Activated CD4-positive, alpha-beta T cell treated with anti-CD3 and anti-CD28 coated beads for 36 hours (primary cell): ENCODE measurements at regions of chr17 and their contacts with region 1.

Region 1: DNA sequence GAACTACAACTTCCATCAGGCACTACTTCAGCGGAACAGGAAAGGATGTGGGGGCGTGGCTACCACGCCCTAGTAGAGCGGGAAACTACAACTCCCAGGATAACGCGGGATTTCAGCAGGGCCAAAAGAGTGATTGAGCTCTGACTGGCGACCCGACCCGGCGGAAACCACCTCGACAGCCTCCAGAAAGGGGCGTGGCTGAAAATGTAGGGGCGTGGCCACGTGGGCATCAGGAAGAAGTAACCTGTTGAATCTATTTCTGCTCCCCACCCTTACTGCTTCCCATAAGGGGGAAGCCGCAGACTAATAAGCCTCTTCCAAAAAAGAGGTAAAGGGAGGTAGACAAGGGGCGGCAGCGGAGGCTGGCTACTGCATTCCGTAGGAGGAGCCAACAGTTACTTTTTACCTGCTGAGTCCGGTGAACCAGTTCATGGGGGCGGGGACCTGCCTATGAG is at the start of gene TMEM102:
- DNase-seq: peak; percentile 99
- ATAC-seq: peak; percentile 84
- H3K4me3 Mint-ChIP-seq: peak within 1 kb of the TSS; percentile 92
- H3K27ac Mint-ChIP-seq: peak within 1 kb of the TSS; percentile 92
- H3K4me1 Mint-ChIP-seq: peaks cover 33% of the 10 kb centered on the region
- H3K27me3 Mint-ChIP-seq: peaks cover 11% of the 10 kb centered on the region
- total RNA-seq, gene TMEM102: 8.7 to 10.7 TPM

Region 2: GRCh38 chr17:7214300-7215135 is 220.7 kb before region 1 on chr17:
- CTCF ChIA-PET with region 1: no interaction called
- POLR2A ChIA-PET with region 1: no interaction called
- intact Hi-C with region 1: loop called in 1 of 2 experiments (anchors 1 kb)
- DNase-seq: peak; percentile 100
- ATAC-seq: peak; percentile 82
- H3K4me3 Mint-ChIP-seq: peak overlapping the region; percentile 81
- H3K27ac Mint-ChIP-seq: peak overlapping the region; percentile 93
- H3K4me1 Mint-ChIP-seq: peaks cover 71% of the 10 kb centered on the region
- H3K27me3 Mint-ChIP-seq: peaks cover 7% of the 10 kb centered on the region

Region 3: DNA sequence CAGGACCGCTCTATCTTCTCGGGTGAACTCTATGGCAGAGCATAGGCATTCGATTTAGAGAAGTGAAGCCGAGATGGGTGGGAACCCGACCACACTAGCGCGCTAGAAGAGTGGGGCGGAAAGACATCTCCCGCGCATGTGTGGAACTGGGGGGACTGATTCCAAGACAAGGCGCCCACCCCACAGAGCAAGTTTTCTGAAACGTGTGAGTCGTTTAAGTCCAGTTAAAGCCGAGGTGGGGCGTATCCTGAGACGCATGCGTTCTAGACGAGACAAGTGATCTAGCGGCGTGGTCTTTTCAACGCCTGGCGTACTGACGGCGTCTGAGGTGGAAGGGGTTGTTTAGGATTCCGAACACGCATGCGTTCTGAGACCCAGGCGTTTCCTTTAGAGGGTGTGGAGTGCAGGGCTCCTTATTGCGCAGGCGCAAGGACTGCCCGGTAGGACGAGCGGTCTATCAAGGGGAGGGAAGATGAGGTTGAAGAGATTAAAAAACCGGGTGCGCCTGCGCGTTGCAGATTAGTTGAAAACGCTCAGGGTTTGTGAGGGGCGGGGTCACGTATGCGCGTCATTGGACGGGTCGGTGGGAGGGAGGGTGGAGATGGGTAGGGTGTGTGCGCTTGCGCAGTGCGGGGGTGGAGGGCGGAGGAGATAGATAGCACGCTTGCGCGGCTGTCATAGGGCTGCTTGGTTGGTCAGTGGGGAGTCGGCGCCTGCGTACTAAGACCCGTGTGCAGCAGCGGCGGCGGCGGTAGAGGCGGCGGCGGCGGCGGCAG is 128.1 kb before region 1 on chr17 and contains the start of gene EIF5A:
- CTCF ChIA-PET with region 1: interaction called, 3 read pairs
- POLR2A ChIA-PET with region 1: no interaction called
- intact Hi-C with region 1: loop called (anchors 1 kb)
- DNase-seq: peak; percentile 100
- ATAC-seq: peak; percentile 86
- H3K4me3 Mint-ChIP-seq: peak within 1 kb of the TSS; percentile 96
- H3K27ac Mint-ChIP-seq: peak within 1 kb of the TSS; percentile 100
- H3K4me1 Mint-ChIP-seq: peaks cover 36% of the 10 kb centered on the region
- H3K27me3 Mint-ChIP-seq: no peaks in the 10 kb centered on the region
- total RNA-seq, gene EIF5A: 780 to 934 TPM

Region 4: DNA sequence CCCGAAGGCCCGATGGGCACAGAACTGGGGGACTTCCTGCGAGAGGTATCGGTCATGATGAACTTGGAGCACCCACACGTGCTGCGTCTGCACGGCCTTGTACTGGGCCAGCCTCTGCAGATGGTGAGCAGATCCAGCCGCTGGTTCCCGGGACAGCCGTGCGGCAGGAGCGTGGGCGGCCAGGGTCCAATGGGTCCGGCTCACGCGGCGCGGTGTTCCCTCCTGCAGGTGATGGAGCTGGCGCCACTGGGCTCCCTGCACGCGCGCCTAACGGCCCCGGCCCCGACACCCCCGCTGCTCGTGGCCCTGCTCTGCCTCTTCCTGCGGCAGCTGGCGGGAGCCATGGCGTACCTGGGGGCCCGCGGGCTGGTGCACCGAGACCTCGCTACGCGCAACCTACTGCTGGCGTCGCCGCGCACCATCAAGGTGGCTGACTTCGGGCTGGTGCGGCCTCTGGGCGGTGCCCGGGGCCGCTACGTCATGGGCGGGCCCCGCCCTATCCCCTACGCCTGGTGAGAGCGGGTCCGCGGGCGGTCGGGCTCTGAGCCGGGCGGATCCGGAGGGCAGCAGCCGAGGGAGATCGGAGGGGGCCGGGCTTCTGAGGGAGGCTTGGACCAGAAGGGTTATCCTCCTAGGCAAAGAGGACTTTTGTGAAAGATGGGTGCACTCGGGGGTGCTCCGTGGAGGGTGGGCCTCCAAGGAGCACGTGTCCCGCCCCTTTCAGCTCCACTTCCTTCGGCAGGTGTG is 51.3 kb before region 1 on chr17:
- CTCF ChIA-PET with region 1: interaction called, 5 read pairs
- POLR2A ChIA-PET with region 1: no interaction called
- intact Hi-C with region 1: loop called in 1 of 2 experiments (anchors 1 kb)
- DNase-seq: peak; percentile 87
- ATAC-seq: peak; percentile 97
- H3K4me3 Mint-ChIP-seq: peak overlapping the region; percentile 73
- H3K27ac Mint-ChIP-seq: peak overlapping the region; percentile 70
- H3K4me1 Mint-ChIP-seq: peaks cover 10% of the 10 kb centered on the region
- H3K27me3 Mint-ChIP-seq: peaks cover 31% of the 10 kb centered on the region

Region 5: DNA sequence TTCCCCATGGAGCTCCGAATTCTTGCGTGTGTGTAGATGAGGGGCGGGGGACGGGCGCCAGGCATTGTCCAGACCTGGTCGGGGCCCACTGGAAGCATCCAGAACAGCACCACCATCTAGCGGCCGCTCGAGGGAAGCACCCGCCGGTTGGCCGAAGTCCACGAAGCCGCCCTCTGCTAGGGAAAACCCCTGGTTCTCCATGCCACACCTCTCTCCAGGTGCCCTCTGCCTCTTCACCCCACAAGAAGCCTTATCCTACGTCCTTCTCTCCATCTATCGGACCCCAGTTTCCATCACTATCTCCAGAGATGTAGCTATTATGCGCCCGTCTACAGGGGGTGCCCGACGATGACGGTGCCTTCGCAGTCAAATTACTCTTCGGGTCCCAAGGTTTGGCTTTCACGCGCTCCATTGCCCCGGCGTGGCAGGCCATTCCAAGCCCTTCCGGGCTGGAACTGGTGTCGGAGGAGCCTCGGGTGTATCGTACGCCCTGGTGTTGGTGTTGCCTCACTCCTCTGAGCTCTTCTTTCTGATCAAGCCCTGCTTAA is 125.9 kb after region 1 on chr17:
- CTCF ChIA-PET with region 1: interaction called, 10 read pairs
- POLR2A ChIA-PET with region 1: interaction called, 3 read pairs
- intact Hi-C with region 1: loop called (anchors 1 kb)
- DNase-seq: peak; percentile 92
- ATAC-seq: peak; percentile 75
- H3K4me3 Mint-ChIP-seq: peak overlapping the region; percentile 79
- H3K27ac Mint-ChIP-seq: peak overlapping the region; percentile 87
- H3K4me1 Mint-ChIP-seq: peaks cover 46% of the 10 kb centered on the region
- H3K27me3 Mint-ChIP-seq: no peaks in the 10 kb centered on the region

Region 6: GRCh38 chr17:7834962-7835813 is 399.9 kb after region 1 on chr17:
- CTCF ChIA-PET with region 1: no interaction called
- POLR2A ChIA-PET with region 1: no interaction called
- intact Hi-C with region 1: loop called in 1 of 2 experiments (anchors 1 kb)
- DNase-seq: peak; percentile 96
- ATAC-seq: peak; percentile 57
- H3K4me3 Mint-ChIP-seq: peak overlapping the region; percentile 93
- H3K27ac Mint-ChIP-seq: peak overlapping the region; percentile 91
- H3K4me1 Mint-ChIP-seq: peaks cover 42% of the 10 kb centered on the region
- H3K27me3 Mint-ChIP-seq: no peaks in the 10 kb centered on the region